Posterior vena cava (tissue), 2 donors: ENCODE measurements at regions of chr5 and their contacts with region 1.

Region 1: DNA sequence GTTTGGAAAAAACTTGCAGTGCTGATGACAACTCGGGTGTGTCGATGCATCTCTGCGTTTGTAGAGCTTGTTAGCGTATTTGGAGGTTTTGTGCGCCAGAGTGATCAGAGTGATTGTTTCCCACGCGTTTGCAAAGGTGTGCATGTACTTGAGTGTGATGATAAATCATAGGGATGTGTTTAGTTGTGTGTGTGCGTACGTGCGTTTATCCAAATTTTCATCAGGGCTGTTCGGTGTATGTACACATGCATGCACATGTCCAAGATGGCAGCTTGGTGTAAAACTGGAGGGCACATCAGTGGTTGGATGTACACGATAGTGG is 248 bp upstream of the C1QTNF2 start:
- DNase-seq: no peak

Region 2: GRCh38 chr5:160133071-160133917 is 237.4 kb before region 1 on chr5:
- intact Hi-C with region 1: no loop called
- DNase-seq: peak; percentile 91

Region 3: GRCh38 chr5:160330212-160330611 is 40.5 kb before region 1 on chr5:
- intact Hi-C with region 1: loop called in 1 of 2 experiments (anchors 1 kb)
- DNase-seq: no peak